GM13977 (cell line): ENCODE measurements at regions of chr17 and their contacts with region 1.

Region 1: GRCh38 chr17:78970834-78971773 is 8.6 kb downstream of the LGALS3BP start:
- DNase-seq: peak; percentile 89
- CTCF ChIP-seq: peak; percentile 92

Region 2: DNA sequence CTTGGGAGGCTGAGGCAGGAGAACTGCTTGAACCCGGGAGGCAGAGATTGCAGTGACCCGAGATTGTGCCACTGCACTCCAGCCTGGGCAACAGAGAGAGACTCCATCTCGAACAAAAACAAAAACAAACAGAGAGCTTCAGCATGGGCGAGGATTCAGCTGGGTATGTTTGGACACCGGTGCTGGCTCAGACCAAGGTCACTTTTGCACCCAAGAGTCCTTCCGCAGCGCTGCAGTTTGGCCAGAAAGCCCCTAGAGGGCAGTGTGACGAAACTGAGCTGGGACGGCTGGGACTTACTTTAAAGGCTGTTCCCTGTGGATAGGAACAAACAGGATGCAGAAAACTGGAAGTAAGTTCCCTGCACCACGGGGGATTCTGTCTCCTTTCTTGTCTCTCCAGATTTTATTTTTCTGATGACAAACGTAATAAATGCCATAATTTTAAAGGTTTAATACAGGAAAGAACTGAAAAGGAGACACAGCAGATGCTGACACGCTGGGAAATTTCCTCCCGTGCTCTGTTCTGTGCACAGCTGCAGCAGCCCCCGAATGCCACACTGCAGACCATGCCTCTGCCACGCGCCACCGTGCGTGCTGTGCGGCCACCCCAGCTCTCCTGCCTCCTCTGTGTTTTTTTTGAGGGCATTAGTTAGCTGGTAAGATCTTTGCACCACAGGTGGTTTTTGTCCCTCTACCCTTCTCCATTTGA is 105.3 kb before region 1 on chr17:
- in situ Hi-C with region 1: loop called (anchors 10 kb)
- DNase-seq: peak; percentile 75
- CTCF ChIP-seq: peak; percentile 97